ENCODE measurements at regions of chr18 and their contacts with region 1.

Region 1: GRCh38 chr18:57980573-57981307 is 63.3 kb upstream of the NEDD4L start:
- H3K4me3 ChIP-seq: no peak overlapping the region
- H3K27ac ChIP-seq: peak overlapping the region; percentile 51; the same call in 1 of the 2 replicates
- H3K4me1 ChIP-seq: peaks cover 19% of the 10 kb centered on the region
- CTCF ChIP-seq: no peak

Region 2: DNA sequence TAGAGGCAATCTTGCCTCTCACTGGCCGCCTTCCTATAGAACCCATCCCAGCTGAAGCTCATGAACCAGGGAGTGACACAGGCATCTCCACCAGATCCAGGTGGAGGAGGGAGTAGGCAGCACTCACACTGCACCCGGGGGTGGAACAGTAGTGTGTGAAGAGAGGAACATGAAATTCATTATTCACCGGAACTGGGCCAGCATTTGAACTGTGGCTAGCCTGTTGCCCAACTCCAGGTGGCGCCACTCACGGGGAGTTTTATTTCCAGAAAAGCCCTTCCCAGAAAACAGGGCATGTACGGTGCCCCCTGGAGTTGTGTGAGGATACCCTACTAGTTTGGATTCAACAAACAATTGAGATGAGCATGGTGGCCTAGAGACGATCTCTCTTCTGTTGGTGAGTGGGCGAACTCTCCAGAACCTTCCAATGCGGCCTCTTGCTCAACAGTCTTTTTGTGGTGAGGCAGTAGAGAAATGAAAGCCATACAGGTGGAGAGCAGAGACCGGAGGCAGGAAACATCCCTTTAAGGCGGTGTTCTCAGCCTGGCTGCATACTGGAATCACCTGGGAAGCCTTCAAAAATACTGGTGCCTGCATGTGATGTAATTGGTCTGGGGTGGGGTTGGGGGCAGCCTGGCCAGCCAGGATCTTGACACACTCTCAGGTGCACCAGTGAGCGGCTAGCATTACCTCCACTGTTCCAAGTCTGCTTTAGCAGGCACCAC is 10.2 kb before region 1 on chr18:
- CTCF ChIA-PET with region 1: interaction called, 12 read pairs
- POLR2A ChIA-PET with region 1: no interaction called
- H3K4me3 ChIP-seq: no peak overlapping the region
- H3K27ac ChIP-seq: no peak overlapping the region
- H3K4me1 ChIP-seq: peaks cover 5% of the 10 kb centered on the region
- CTCF ChIP-seq: no peak